ENCODE measurements at regions of chrX and their contacts with region 1.

Region 1: DNA sequence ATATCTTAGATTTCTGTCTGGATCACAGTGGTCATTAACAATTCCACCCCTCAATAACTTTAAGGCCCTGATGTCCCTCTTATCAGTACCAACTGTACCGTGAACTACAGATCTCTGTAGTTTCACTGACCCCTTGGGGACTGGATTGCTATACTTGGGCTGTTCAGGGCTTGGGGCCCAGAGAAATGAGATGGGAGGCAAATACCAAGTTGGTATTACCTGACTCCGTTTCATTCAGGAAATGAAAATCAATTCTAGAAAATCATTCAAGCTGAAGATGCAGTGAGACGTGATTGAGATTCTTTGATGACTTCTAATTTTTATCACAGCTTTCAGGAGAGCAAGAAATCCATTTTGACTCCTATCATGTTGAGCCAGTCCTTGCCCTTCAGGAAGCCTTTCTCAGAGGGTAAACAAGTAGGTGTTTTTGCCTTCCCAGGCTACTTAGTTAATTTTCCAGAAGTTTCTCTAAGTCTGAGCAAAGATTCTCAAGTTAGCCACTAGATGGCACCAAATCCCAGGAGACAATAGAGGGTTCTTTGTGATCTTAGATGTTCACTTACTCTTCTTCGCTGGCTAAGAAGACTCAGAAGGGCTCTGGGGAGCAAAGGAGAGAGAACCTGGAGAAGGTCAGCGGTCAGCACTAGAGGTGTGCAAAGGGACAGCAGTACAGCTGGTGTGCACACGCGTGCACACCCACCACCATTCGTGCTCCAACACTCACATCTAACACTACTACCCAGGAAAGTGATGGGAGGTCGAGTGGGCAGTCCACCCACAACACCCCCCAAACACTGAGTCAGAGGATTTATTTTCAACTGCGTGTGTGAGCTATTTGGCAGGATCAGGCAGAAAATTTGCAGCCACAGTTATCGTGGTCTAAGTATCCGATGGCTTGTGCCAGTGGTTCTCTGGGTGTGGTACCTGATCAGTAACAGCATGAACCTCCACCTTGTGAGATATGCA is 7.4 kb downstream of the HNRNPH2 start:
- DNase-seq: no peak
- H3K4me3 ChIP-seq: no peak overlapping the region
- H3K27ac ChIP-seq: peak overlapping the region in 3 of 4 donors; percentile 24 to 74 (median 44)
- H3K4me1 ChIP-seq: peaks cover 0 to 61% (median 3%) of the 10 kb centered on the region in 3 donors
- H3K27me3 ChIP-seq: no peaks in the 10 kb centered on the region
- CTCF ChIP-seq: peak; percentile 52 to 77 (median 68)
- POLR2A ChIP-seq: no peak

Region 2: GRCh38 chrX:101485199-101485949 is 69.9 kb after region 1 on chrX and contains the start of gene ARMCX4:
- intact Hi-C with region 1: no loop called
- DNase-seq: no peak
- H3K4me3 ChIP-seq: peak within 1 kb of the TSS; percentile 26 to 64 (median 42)
- H3K27ac ChIP-seq: peak within 1 kb of the TSS in 2 of 4 donors; percentile 33 to 42
- H3K4me1 ChIP-seq: peaks cover 0 to 10% (median 0%) of the 10 kb centered on the region in 3 donors
- H3K27me3 ChIP-seq: no peaks in the 10 kb centered on the region
- CTCF ChIP-seq: no peak
- POLR2A ChIP-seq: no peak
- total RNA-seq, gene ARMCX4: 0.97 to 6.3 (median 3.7) TPM

Region 3: DNA sequence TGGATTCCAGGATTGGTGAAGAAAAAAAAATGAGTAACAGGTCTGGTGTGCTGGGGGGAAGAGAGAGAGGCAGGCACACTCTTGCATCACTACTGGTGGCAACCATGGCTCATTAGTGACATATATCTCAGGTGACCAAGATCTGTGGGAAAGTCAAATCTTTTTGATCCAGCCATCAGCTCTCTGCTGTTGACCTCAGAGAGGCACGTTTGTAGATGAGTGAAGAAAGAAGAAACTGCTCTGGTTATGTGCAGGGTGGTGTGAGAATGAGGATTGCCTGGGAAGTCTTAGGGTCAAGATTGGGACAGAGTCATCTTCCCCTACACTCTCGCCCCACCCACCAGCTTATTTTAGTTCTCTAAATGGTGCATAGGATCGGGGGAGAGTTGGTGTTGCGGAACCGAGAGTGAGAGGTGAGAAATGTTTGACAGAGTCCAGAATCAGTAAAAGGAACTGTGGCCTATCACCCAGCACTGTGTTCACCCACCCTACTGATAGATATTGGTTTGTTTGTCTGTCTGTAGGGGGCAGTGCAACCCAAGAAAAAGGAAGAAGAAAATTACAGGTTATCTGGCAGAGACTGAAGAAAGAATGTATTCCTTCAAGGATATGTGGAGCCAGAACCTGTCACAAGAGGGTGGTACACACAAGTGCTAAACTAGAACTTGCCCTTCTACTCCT is 180.4 kb after region 1 on chrX:
- intact Hi-C with region 1: loop called (anchors 10 kb)
- DNase-seq: no peak
- H3K4me3 ChIP-seq: no peak overlapping the region
- H3K27ac ChIP-seq: no peak overlapping the region
- H3K4me1 ChIP-seq: no peaks in the 10 kb centered on the region
- H3K27me3 ChIP-seq: peaks cover 0 to 8% (median 0%) of the 10 kb centered on the region in 4 donors
- CTCF ChIP-seq: peak in 5 of 6 experiments; percentile 36 to 62 (median 51)
- POLR2A ChIP-seq: no peak